GM12878 (cell line): ENCODE measurements at regions of chr4 and their contacts with region 1.

Region 1: GRCh38 chr4:87026800-87027495 is 92.1 kb downstream of the AFF1 start:
- DNase-seq: peak; percentile 91
- ATAC-seq: peak; percentile 92
- H3K4me3 ChIP-seq: peak overlapping the region; percentile 8; the same call in 1 of the 2 replicates
- H3K27ac ChIP-seq: peak overlapping the region; percentile 98
- H3K4me1 ChIP-seq: peaks cover 46% of the 10 kb centered on the region
- H3K27me3 ChIP-seq: no peaks in the 10 kb centered on the region
- CTCF ChIP-seq: no peak
- EP300 ChIP-seq: peak; percentile 68 to 73; a peak in 2 of 4 replicates
- POLR2A ChIP-seq: no peak
- RAD21 ChIP-seq: peak; percentile 30; the same call in 1 of the 2 replicates

Region 2: DNA sequence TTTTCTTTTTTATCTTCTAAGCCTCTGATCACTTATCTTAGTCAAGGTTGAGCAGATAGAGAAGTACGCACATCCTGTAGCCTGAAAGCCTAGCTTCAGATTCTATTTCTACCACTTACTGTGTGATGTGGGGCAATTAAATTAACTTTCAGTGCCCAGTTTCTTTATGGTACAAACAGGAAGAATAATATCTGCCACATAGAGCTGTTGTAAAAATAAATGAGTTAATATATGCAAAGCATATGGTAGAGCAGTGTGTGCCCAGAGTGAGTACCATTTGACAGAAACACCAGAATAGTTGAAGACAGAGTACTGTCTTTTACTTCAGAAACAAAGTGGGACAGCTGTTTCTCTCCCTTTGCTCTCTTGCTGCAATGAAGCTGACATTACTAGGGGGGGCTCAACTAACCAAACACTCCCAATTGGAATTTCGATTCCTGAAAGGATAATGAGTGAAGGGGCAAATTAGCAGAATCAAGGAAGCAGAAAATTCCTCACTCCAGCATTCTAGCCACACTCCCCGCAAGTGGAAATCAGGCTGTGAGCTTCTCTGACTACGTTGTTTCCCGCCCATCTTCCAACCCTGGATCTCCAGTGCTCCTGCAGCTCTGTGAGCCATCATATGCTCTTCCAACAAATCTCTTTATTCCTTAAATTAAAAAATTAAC is 747.5 kb before region 1 on chr4:
- CTCF ChIA-PET with region 1: no interaction called
- POLR2A ChIA-PET with region 1: no interaction called
- RAD21 ChIA-PET with region 1: no interaction called
- SMC1A ChIA-PET with region 1: no interaction called
- in situ Hi-C with region 1: no loop called
- intact Hi-C with region 1: no loop called
- DNase-seq: no peak
- ATAC-seq: peak; percentile 88
- H3K4me3 ChIP-seq: no peak overlapping the region
- H3K27ac ChIP-seq: no peak overlapping the region
- H3K4me1 ChIP-seq: no peaks in the 10 kb centered on the region
- H3K27me3 ChIP-seq: no peaks in the 10 kb centered on the region
- CTCF ChIP-seq: no peak
- EP300 ChIP-seq: no peak
- POLR2A ChIP-seq: no peak
- RAD21 ChIP-seq: no peak

Region 3: GRCh38 chr4:86769794-86770193 is 257.2 kb before region 1 on chr4:
- CTCF ChIA-PET with region 1: no interaction called
- POLR2A ChIA-PET with region 1: no interaction called
- RAD21 ChIA-PET with region 1: no interaction called
- SMC1A ChIA-PET with region 1: no interaction called
- in situ Hi-C with region 1: no loop called
- intact Hi-C with region 1: no loop called
- DNase-seq: no peak
- ATAC-seq: no peak
- H3K4me3 ChIP-seq: no peak overlapping the region
- H3K27ac ChIP-seq: no peak overlapping the region
- H3K4me1 ChIP-seq: no peaks in the 10 kb centered on the region
- H3K27me3 ChIP-seq: no peaks in the 10 kb centered on the region
- CTCF ChIP-seq: no peak
- EP300 ChIP-seq: no peak
- POLR2A ChIP-seq: no peak
- RAD21 ChIP-seq: no peak

Region 4: DNA sequence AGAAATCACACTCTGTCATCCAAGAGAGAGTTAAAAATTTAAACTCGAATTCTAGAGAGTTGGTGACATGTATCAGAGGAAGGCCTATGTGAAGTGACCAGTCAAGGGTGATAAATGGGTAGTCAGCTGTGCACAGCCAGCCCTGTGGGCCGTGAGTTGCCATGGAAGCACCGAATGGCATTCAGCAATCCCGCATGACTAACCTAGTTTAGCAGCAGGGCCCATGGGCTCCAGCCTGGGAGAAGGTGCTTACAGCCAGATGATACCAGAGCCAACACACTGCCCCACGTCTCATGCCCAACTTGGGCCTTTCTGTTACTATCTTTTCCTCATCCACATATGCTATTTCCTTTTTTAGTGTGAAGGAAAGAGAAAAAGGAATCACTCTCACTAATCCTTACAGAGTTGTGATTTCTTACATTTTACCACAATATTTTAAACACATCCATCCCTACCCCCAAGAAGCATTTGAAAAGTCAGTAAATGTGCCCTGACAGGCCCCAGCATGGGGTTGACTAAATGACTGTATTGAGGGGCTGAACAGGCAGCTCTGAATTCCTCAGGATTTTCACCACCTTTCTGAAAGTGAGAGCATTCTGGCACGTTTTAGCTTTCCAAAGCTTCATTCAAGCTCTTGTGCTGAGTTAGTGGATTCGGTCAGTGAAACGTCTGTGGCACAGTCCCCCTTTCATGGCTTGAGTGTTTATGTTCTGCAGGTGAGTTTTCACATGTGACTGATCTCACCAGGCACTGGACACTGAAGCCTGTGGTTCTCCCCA is 12.1 kb after region 1 on chr4:
- CTCF ChIA-PET with region 1: interaction called, 4 read pairs
- POLR2A ChIA-PET with region 1: interaction called, 8 read pairs
- RAD21 ChIA-PET with region 1: interaction called, 10 read pairs
- SMC1A ChIA-PET with region 1: interaction called, 25 read pairs
- in situ Hi-C with region 1: no loop called
- intact Hi-C with region 1: no loop called
- DNase-seq: no peak
- ATAC-seq: peak; percentile 83
- H3K4me3 ChIP-seq: peak overlapping the region; percentile 5; the same call in 1 of the 2 replicates
- H3K27ac ChIP-seq: peak overlapping the region; percentile 3
- H3K4me1 ChIP-seq: peaks cover 52% of the 10 kb centered on the region
- H3K27me3 ChIP-seq: no peaks in the 10 kb centered on the region
- CTCF ChIP-seq: no peak
- EP300 ChIP-seq: no peak
- POLR2A ChIP-seq: no peak
- RAD21 ChIP-seq: no peak

Region 5: GRCh38 chr4:87073199-87074120 is 46.5 kb after region 1 on chr4:
- CTCF ChIA-PET with region 1: interaction called, 3 read pairs
- POLR2A ChIA-PET with region 1: interaction called, 3 read pairs
- RAD21 ChIA-PET with region 1: interaction called, 7 read pairs
- SMC1A ChIA-PET with region 1: interaction called, 4 read pairs
- in situ Hi-C with region 1: no loop called
- intact Hi-C with region 1: loop called (anchors 2 kb)
- DNase-seq: peak; percentile 93
- ATAC-seq: peak; percentile 93
- H3K4me3 ChIP-seq: peak overlapping the region; percentile 65; the same call in 1 of the 2 replicates
- H3K27ac ChIP-seq: peak overlapping the region; percentile 98
- H3K4me1 ChIP-seq: peaks cover 17% of the 10 kb centered on the region
- H3K27me3 ChIP-seq: no peaks in the 10 kb centered on the region
- CTCF ChIP-seq: no peak
- EP300 ChIP-seq: peak; percentile 65 to 67; a peak in 3 of 4 replicates
- POLR2A ChIP-seq: peak; percentile 62
- RAD21 ChIP-seq: no peak